ENCODE measurements at regions of chr4 and their contacts with region 1.

Region 1: GRCh38 chr4:99405433-99406115 is 29.6 kb downstream of the ADH7 start:
- DNase-seq: peak; percentile 91
- H3K4me3 ChIP-seq: no peak overlapping the region
- H3K27ac ChIP-seq: peak overlapping the region; percentile 39
- H3K4me1 ChIP-seq: peaks cover 10% of the 10 kb centered on the region
- H3K27me3 ChIP-seq: no peaks in the 10 kb centered on the region
- CTCF ChIP-seq: peak; percentile 83

Region 2: GRCh38 chr4:99117876-99118693 is 287.5 kb before region 1 on chr4:
- intact Hi-C with region 1: loop called (anchors 5 kb)
- DNase-seq: no peak
- H3K4me3 ChIP-seq: no peak overlapping the region
- H3K27ac ChIP-seq: no peak overlapping the region
- H3K4me1 ChIP-seq: no peaks in the 10 kb centered on the region
- H3K27me3 ChIP-seq: no peaks in the 10 kb centered on the region
- CTCF ChIP-seq: no peak

Region 3: GRCh38 chr4:99205153-99205979 is 200.2 kb before region 1 on chr4:
- intact Hi-C with region 1: loop called (anchors 5 kb)
- DNase-seq: peak; percentile 39
- H3K4me3 ChIP-seq: no peak overlapping the region
- H3K27ac ChIP-seq: peak overlapping the region; percentile 1
- H3K4me1 ChIP-seq: peaks cover 5% of the 10 kb centered on the region
- H3K27me3 ChIP-seq: no peaks in the 10 kb centered on the region
- CTCF ChIP-seq: no peak

Region 4: GRCh38 chr4:99323756-99324155 is 81.8 kb before region 1 on chr4:
- intact Hi-C with region 1: no loop called
- DNase-seq: no peak
- H3K4me3 ChIP-seq: no peak overlapping the region
- H3K27ac ChIP-seq: no peak overlapping the region
- H3K4me1 ChIP-seq: no peaks in the 10 kb centered on the region
- H3K27me3 ChIP-seq: no peaks in the 10 kb centered on the region
- CTCF ChIP-seq: no peak

Region 5: DNA sequence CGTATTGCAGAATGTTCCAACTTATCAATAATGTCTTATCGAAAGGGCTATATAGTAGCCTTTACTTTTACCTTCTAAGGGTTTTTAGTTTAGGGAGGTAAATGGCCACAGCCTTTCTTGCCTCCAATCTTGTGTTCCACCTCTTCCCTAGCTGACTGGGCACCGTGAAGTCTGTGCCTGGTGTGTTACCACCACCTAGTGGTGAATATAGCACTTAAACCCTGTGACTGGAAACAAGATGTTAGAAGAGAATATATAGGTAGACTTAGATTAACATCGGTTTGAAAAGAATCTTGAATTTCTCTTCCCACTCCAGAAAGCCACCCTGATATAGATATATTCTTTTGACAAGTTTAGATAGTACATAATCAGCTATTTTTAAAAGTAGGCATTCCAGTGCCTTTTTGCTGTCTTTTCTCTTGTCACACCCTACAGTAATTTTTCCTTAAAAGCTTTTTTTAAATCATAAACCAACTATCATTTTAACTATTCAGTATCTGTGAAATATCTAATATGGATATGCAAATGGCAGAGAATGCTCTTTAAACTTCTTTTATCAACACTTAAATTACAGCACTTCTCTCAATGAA is 57.4 kb after region 1 on chr4:
- intact Hi-C with region 1: loop called (anchors 5 kb)
- DNase-seq: peak; percentile 62
- H3K4me3 ChIP-seq: no peak overlapping the region
- H3K27ac ChIP-seq: no peak overlapping the region
- H3K4me1 ChIP-seq: no peaks in the 10 kb centered on the region
- H3K27me3 ChIP-seq: no peaks in the 10 kb centered on the region
- CTCF ChIP-seq: peak; percentile 64